IMR-90 (cell line): ENCODE measurements at regions of chr14 and their contacts with region 1.

Region 1: GRCh38 chr14:101235335-101236103 is 325.8 kb upstream of the DIO3 start:
- DNase-seq: peak; percentile 32
- ATAC-seq: peak; percentile 94
- H3K4me3 ChIP-seq: no peak overlapping the region
- H3K27ac ChIP-seq: no peak overlapping the region
- H3K4me1 ChIP-seq: no peaks in the 10 kb centered on the region
- H3K27me3 ChIP-seq: peaks cover 25% of the 10 kb centered on the region
- CTCF ChIP-seq: peak; percentile 73
- POLR2A ChIP-seq: no peak
- RAD21 ChIP-seq: peak; percentile 88

Region 2: DNA sequence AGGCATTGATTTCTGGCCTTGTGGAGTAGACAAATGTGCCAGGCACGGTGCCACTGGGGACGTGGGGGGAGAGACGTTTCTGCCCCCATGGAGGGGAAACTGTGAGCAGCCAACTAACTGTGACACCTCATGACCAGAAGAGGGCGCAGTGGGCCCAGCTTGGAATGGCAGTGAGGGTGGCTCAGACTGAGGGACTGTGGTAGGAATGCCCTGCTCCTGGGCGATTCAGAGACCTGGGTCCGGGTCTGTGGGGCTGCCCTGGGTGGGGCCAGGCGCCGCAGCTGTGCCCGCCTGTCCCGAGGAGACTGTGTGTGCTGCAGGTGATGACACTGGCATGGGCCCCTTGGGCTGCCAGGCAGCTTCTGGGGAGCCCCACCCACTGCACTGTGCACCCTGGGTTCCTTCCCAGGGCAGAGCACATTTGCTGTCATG is 851.8 kb before region 1 on chr14:
- CTCF ChIA-PET with region 1: interaction called, 3 read pairs
- POLR2A ChIA-PET with region 1: no interaction called
- dilution Hi-C with region 1: no loop called
- in situ Hi-C with region 1: no loop called
- intact Hi-C with region 1: loop called (anchors 10 kb)
- DNase-seq: peak; percentile 55
- ATAC-seq: peak; percentile 77
- H3K4me3 ChIP-seq: no peak overlapping the region
- H3K27ac ChIP-seq: no peak overlapping the region
- H3K4me1 ChIP-seq: peaks cover 26% of the 10 kb centered on the region
- H3K27me3 ChIP-seq: no peaks in the 10 kb centered on the region
- CTCF ChIP-seq: peak; percentile 79
- POLR2A ChIP-seq: no peak
- RAD21 ChIP-seq: peak; percentile 82

Region 3: GRCh38 chr14:100524933-100525243 is 710.6 kb before region 1 on chr14:
- CTCF ChIA-PET with region 1: no interaction called
- POLR2A ChIA-PET with region 1: no interaction called
- dilution Hi-C with region 1: no loop called
- in situ Hi-C with region 1: no loop called
- intact Hi-C with region 1: loop called (anchors 10 kb)
- DNase-seq: peak; percentile 15
- ATAC-seq: no peak
- H3K4me3 ChIP-seq: no peak overlapping the region
- H3K27ac ChIP-seq: no peak overlapping the region
- H3K4me1 ChIP-seq: no peaks in the 10 kb centered on the region
- H3K27me3 ChIP-seq: no peaks in the 10 kb centered on the region
- CTCF ChIP-seq: peak; percentile 55
- POLR2A ChIP-seq: no peak
- RAD21 ChIP-seq: peak; percentile 68

Region 4: DNA sequence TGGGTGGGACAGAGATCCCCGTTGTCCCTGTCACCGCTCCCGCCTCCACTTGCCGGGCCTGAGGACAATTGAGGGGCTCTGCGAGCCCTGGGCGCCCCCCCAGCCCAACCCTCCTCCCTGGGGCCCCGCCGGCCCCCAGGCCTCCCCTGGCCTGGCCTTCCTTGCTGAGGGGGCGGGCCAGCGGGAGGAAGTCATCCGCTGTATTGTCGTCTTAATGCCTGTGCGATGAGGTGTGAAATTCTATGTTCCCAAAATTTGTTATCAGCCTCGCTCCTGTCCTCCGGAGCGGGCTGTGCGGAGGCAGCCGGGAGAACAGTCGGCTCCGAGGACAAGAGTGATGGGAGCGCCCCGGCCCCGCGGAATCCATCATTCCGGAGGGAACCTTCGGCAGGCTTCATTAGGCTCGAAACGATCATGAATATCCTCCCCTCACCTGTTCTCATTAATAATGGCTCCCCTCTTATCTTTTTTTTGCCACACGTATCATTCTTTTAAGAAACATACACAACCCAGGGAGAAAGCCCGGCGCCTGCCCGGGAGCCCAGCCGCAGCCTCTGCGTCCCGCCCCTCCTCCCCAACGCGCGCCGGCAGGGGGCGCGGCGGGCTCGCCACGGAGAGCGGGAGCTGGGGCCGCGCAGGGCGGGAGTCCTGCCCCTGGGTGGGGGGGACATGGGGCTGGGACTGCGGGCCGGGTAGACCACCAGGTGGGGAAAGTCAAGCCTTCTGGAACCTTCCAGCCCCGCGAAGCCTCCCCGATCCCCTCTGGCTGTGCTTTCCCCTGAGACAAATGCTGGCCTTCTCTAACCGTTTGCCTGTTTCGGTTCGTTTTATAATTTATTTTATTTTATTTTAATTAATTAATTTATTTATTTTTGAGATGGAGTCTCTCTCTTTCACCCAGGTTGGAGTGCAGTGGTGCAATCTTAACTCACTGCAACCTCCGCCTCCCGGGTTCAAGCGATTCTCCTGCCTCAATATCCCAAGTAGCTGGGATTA is 525.9 kb before region 1 on chr14:
- CTCF ChIA-PET with region 1: no interaction called
- POLR2A ChIA-PET with region 1: no interaction called
- dilution Hi-C with region 1: no loop called
- in situ Hi-C with region 1: loop called (anchors 25 kb)
- intact Hi-C with region 1: no loop called
- DNase-seq: peak; percentile 10
- ATAC-seq: peak; percentile 93
- H3K4me3 ChIP-seq: no peak overlapping the region
- H3K27ac ChIP-seq: no peak overlapping the region
- H3K4me1 ChIP-seq: no peaks in the 10 kb centered on the region; the same call in 1 of the 2 replicates
- H3K27me3 ChIP-seq: peaks cover 47% of the 10 kb centered on the region
- CTCF ChIP-seq: peak; percentile 56
- POLR2A ChIP-seq: no peak
- RAD21 ChIP-seq: peak; percentile 59

Region 5: DNA sequence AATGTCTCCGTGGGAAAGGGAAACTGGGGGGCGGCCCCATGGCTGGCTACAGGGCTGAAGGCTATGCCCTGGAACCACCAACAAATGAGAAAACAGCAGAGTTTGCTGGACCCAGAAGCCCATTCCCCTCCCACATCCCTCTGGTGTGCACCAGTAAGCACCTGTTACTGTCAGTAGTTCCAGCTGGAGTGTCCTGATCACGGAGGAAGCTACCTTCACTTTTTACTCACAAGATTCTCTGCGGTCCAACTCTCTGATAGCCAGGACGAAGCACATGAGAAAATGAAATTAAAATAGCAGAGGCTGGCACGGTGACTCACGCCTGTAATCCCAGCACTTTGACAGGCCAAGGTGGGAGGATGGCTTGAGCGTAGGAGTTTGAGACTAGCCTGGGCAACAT is 432.3 kb before region 1 on chr14:
- CTCF ChIA-PET with region 1: no interaction called
- POLR2A ChIA-PET with region 1: no interaction called
- dilution Hi-C with region 1: no loop called
- in situ Hi-C with region 1: no loop called
- intact Hi-C with region 1: no loop called
- DNase-seq: no peak
- ATAC-seq: no peak
- H3K4me3 ChIP-seq: no peak overlapping the region
- H3K27ac ChIP-seq: no peak overlapping the region
- H3K4me1 ChIP-seq: no peaks in the 10 kb centered on the region
- H3K27me3 ChIP-seq: peaks cover 45% of the 10 kb centered on the region
- CTCF ChIP-seq: no peak
- POLR2A ChIP-seq: no peak
- RAD21 ChIP-seq: no peak

Region 6: GRCh38 chr14:101072945-101073597 is 162.4 kb before region 1 on chr14:
- CTCF ChIA-PET with region 1: no interaction called
- POLR2A ChIA-PET with region 1: no interaction called
- dilution Hi-C with region 1: no loop called
- in situ Hi-C with region 1: no loop called
- intact Hi-C with region 1: loop called (anchors 10 kb)
- DNase-seq: peak; percentile 98
- ATAC-seq: peak; percentile 86
- H3K4me3 ChIP-seq: no peak overlapping the region
- H3K27ac ChIP-seq: peak overlapping the region; percentile 42
- H3K4me1 ChIP-seq: peaks cover 26% of the 10 kb centered on the region
- H3K27me3 ChIP-seq: peaks cover under 1% of the 10 kb centered on the region; the same call in 1 of the 2 replicates
- CTCF ChIP-seq: 0 out of 2 replicates have a peak, but pooled peaks have one; percentile 2
- POLR2A ChIP-seq: no peak
- RAD21 ChIP-seq: peak; percentile 47

Region 7: DNA sequence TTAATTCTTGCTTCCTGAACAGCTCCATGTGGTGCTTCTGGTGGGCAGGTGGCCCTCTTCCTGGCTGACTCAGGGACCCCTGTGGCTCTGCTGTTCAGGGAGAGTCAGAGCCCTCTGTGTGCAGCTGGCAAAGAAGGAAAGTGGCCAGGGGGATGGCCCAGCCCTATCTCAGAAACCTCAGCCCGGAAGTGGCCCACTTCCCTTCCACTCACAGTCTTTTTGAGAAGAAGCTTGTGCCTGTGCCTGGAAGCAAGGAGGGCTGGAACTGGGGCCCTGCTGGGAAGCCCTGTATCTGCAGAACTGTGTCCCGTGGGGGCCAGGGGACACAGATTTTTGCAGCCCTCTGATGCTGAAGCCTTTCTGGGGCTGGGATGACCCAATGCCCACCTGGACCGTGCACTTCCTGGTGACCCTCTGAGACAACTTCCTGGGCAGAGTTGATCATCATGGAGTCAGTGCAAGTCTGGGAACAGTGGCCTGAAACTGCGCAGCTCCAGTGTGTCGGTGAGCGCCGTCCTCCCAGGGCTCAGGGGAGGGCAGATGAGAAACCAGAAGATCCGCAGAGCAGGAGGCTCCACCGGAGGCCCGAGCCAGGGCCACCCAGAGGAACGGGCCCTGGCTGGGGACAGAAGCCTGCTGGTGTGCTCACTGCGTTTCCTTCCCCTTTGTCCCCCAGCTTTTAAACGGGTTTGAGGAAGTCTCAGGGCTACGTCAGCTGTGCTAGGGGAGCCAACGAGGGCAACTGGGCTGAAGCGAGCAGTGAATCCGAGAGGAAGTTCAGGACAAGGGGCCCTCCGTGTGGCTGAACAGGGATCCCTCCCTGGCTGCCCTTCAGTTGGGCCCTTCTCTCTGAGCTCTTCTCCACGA is 114.6 kb before region 1 on chr14:
- CTCF ChIA-PET with region 1: no interaction called
- POLR2A ChIA-PET with region 1: no interaction called
- dilution Hi-C with region 1: no loop called
- in situ Hi-C with region 1: no loop called
- intact Hi-C with region 1: no loop called
- DNase-seq: no peak
- ATAC-seq: no peak
- H3K4me3 ChIP-seq: no peak overlapping the region
- H3K27ac ChIP-seq: no peak overlapping the region
- H3K4me1 ChIP-seq: no peaks in the 10 kb centered on the region
- H3K27me3 ChIP-seq: peaks cover 12% of the 10 kb centered on the region; the same call in 1 of the 2 replicates
- CTCF ChIP-seq: no peak
- POLR2A ChIP-seq: no peak
- RAD21 ChIP-seq: no peak

Region 8: DNA sequence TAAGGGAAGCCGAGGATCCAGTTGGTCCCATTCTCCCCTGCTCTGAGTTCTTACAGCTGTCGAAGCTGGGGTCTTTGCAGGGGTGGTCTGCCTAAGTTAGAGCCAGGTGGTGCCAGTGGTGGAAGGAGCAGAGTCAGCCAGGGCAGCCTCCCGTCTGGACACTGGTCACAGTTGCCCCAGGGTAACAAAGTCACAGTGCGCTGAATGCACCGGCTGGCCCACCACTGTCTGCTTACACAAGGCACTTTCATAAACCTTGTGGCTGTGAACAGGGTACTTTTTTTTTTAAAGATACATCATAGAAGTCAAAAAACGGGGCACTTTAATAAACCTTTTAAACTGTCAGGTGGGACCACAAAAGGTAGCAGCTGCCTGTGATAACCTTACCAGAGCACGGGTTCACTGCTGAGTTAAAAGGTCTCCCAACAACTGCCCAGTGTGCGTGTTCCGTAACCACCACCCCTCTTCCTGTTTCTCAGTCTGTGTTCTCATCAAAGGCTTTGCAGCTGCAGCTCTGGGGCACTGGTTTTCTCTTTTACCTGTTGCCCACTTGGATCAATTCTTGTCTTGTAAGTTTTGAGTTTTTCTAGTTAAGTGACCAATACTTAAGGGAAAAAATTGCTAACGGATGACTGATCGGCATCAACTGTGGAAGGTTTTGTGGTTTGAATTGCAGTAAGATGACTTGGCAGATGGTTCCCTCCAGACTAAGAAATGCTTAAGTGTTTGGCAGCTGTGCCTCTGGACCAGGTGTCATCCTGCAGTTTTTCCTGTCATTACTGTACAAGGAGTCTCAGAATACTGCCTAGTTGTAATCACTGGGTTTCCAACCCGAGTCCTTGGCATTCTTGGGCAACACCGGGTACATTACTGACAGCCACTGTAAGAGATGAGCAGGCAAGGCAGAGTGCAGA is 784.8 kb after region 1 on chr14:
- CTCF ChIA-PET with region 1: no interaction called
- POLR2A ChIA-PET with region 1: no interaction called
- dilution Hi-C with region 1: no loop called
- in situ Hi-C with region 1: no loop called
- intact Hi-C with region 1: no loop called
- DNase-seq: peak; percentile 94
- ATAC-seq: peak; percentile 69
- H3K4me3 ChIP-seq: no peak overlapping the region
- H3K27ac ChIP-seq: no peak overlapping the region; the same call in 1 of the 2 replicates
- H3K4me1 ChIP-seq: peaks cover 2% of the 10 kb centered on the region; the same call in 1 of the 2 replicates
- H3K27me3 ChIP-seq: no peaks in the 10 kb centered on the region
- CTCF ChIP-seq: no peak
- POLR2A ChIP-seq: no peak
- RAD21 ChIP-seq: no peak